Heart left ventricle (tissue), 16 donors: ENCODE measurements at regions of chr1 and their contacts with region 1.

Region 1: GRCh38 chr1:244652699-244653466 is at the start of gene DESI2:
- DNase-seq: peak; percentile 98 to 99 (median 99)
- ATAC-seq: peak; percentile 97 to 99 (median 98)
- H3K4me3 ChIP-seq: peak within 1 kb of the TSS; percentile 51 to 99 (median 88)
- H3K27ac ChIP-seq: peak within 1 kb of the TSS; percentile 83 to 98 (median 96)
- H3K4me1 ChIP-seq: peaks cover 4 to 48% (median 31%) of the 10 kb centered on the region in 12 donors
- H3K27me3 ChIP-seq: no peaks in the 10 kb centered on the region
- CTCF ChIP-seq: peak; percentile 32 to 77 (median 58)
- POLR2A ChIP-seq: peak; percentile 87 to 98
- total RNA-seq, gene DESI2: 18.7 to 34.2 (median 23.1) TPM

Region 2: GRCh38 chr1:244451951-244452795 is 200.7 kb before region 1 on chr1:
- intact Hi-C with region 1: loop called in 6 of 10 experiments (anchors 2 to 10 kb)
- DNase-seq: peak; percentile 99 to 100 (median 100)
- ATAC-seq: peak; percentile 97 to 99 (median 98)
- H3K4me3 ChIP-seq: peak overlapping the region; percentile 72 to 96 (median 92)
- H3K27ac ChIP-seq: peak overlapping the region; percentile 63 to 97 (median 94)
- H3K4me1 ChIP-seq: peaks cover 0 to 42% (median 12%) of the 10 kb centered on the region in 12 donors
- H3K27me3 ChIP-seq: no peaks in the 10 kb centered on the region
- CTCF ChIP-seq: peak in 9 of 12 donors; percentile 29 to 62 (median 44)
- POLR2A ChIP-seq: no peak

Region 3: DNA sequence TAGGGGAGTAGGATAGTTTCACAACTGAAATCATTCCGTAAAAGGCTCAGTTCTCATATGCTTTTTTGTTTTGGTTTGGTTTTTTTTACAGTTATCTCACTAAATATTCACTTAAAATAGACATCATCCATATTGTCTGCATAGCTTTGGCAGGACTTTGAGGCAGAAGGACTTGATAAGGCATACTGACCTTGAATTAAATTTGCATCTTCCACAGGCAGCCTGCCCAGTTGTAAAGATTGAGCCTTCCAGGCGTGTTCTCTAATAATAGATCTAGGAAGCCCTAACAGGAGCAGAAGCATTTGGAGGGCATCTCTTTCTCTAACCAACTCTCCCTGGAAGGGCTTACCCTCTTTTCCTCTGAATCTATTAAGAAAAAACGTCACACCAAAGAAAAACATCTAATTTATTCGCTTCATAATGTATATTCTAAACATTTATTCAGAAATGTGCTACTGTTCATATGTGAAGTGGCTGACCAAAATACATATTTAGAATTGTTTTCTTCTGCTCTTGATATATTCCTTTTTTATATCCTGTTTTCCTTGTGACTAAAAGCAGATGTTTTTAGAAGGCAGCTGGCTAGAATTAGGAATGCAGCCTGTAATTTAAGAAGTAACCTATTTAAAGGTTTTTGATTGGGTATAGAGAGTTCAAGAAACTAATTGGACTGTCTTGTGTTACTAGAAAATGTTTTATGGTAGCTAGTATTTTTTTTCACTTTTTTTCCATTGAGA is 20.2 kb after region 1 on chr1:
- intact Hi-C with region 1: loop called in 1 of 10 experiments (anchors 2 kb)
- DNase-seq: peak in 4 of 5 donors; percentile 64 to 74 (median 66)
- ATAC-seq: peak; percentile 94 to 97 (median 94)
- H3K4me3 ChIP-seq: peak overlapping the region in 5 of 12 donors; percentile 3 to 30 (median 9)
- H3K27ac ChIP-seq: peak overlapping the region; percentile 16 to 86 (median 78)
- H3K4me1 ChIP-seq: peaks cover 0 to 47% (median 17%) of the 10 kb centered on the region in 12 donors
- H3K27me3 ChIP-seq: no peaks in the 10 kb centered on the region
- CTCF ChIP-seq: no peak
- POLR2A ChIP-seq: no peak

Region 4: GRCh38 chr1:244757091-244757939 is 104.4 kb after region 1 on chr1:
- intact Hi-C with region 1: no loop called
- DNase-seq: no peak
- ATAC-seq: peak in 1 of 4 donors; percentile 31
- H3K4me3 ChIP-seq: no peak overlapping the region
- H3K27ac ChIP-seq: no peak overlapping the region
- H3K4me1 ChIP-seq: no peaks in the 10 kb centered on the region
- H3K27me3 ChIP-seq: no peaks in the 10 kb centered on the region
- CTCF ChIP-seq: no peak
- POLR2A ChIP-seq: no peak

Region 5: DNA sequence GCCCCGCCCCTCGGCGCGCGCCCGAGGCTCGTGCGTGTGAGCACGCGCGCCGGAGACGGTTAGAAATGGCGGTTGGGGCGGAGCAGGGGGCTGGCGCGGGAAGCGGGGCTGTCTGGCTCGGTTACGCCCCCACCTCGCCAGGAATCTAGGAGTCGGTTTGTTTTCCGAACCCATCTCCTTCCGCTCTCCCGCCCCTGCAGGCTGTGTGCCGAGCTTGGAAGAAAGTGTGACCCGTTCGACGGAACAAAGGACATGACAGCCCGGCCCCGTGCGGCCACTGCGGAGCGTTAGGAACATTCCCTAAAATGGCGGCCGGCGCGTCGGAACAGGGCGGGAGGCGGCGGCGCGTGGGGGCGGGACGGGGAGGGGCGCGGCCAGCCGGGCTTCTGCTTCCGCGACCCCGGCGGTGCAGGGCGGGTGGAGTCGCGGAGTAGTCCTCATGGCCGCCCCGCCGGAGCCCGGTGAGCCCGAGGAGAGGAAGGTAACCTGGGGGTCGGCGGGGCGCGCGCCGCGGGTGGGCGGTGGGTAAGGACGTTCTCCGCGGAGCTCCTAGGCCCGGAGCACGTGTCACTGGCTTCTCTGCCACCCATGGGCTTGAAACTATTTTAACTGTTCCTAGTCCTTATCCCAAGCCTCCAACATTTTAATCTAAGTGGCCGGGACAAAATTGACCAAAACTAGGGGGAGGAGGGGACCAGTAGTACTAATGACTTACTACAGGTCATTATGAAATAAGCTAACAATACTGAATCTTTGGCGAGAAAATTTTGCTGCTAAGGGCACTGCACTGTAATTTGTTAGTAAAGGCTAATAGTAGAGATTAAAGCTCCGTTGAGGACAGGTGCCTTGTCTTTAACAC is 182.6 kb after region 1 on chr1 and contains the start of gene COX20:
- intact Hi-C with region 1: loop called in 1 of 10 experiments (anchors 5 kb)
- DNase-seq: peak; percentile 92 to 94 (median 93)
- ATAC-seq: peak; percentile 80 to 93 (median 87)
- H3K4me3 ChIP-seq: peak within 1 kb of the TSS; percentile 48 to 86 (median 78)
- H3K27ac ChIP-seq: peak within 1 kb of the TSS; percentile 96 to 100 (median 98)
- H3K4me1 ChIP-seq: peaks cover 3 to 53% (median 26%) of the 10 kb centered on the region in 12 donors
- H3K27me3 ChIP-seq: no peaks in the 10 kb centered on the region
- CTCF ChIP-seq: peak in 2 of 12 donors; percentile 13 to 29
- POLR2A ChIP-seq: peak in 1 of 2 donors; percentile 33
- total RNA-seq, gene COX20: 43.5 to 77.4 (median 59.8) TPM

Region 6: DNA sequence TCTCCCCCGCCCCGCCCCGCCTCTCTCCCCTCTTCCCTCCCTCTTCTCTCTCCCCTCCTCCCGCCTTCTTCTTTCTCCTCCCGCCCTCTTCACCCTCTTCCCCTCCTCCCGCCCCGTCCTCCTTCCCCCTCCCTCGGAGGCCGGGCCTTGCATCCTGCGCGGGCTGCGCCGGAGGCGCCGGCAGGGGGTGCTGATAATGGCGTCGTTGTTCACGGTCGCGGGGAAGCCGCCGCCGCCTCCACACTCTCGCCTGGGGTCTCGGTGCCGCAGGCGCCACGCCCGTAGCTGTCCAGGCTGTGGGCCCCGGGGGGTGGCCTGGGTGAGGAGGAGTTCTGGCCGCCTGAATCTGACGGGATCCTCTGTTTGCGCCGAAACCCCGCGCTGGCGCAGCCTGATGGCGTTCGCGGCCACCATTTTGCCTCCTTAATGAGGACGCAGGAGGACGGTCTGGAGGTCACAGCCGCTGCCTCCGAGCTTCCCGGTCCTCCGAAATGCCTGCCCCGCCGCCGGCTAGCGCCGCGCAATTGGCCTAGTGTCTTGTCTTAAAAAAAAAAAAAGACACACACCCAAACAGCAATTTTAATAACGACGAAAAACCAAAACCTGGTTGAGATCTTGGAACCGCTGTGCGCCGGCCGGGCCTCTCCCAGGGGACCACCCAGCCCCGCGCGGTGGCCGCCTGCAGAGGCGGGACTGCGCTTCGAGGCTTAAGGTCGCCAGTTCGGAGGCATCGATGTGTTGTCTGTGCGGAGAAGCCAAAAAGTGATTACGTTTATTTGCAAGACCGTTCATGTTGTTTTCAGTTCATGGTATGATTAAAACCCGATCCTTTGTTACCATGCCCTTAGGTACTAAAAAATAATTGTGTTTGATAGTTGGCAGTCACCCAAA is 318.0 kb after region 1 on chr1:
- intact Hi-C with region 1: loop called in 5 of 10 experiments (anchors 2 to 10 kb)
- DNase-seq: peak; percentile 93 to 97 (median 95)
- ATAC-seq: peak; percentile 80 to 93 (median 90)
- H3K4me3 ChIP-seq: peak overlapping the region; percentile 68 to 95 (median 76)
- H3K27ac ChIP-seq: peak overlapping the region; percentile 97 to 100 (median 99)
- H3K4me1 ChIP-seq: peaks cover 0 to 24% (median 17%) of the 10 kb centered on the region in 12 donors
- H3K27me3 ChIP-seq: no peaks in the 10 kb centered on the region
- CTCF ChIP-seq: peak; percentile 43 to 83 (median 58)
- POLR2A ChIP-seq: peak in 1 of 2 donors; percentile 58